ENCODE measurements at regions of chr1 and their contacts with region 1.

Region 1: GRCh38 chr1:37434292-37434907 is 40.0 kb upstream of the ZC3H12A start:
- DNase-seq: peak; percentile 43 to 84 (median 61)
- ATAC-seq: peak; percentile 42 to 83 (median 78)
- H3K4me3 ChIP-seq: no peak overlapping the region
- H3K27ac ChIP-seq: no peak overlapping the region
- H3K4me1 ChIP-seq: no peaks in the 10 kb centered on the region
- H3K27me3 ChIP-seq: peaks cover 0 to 62% (median 19%) of the 10 kb centered on the region in 9 donors
- CTCF ChIP-seq: peak; percentile 74 to 95 (median 87)
- POLR2A ChIP-seq: no peak

Region 2: GRCh38 chr1:36516372-36517325 is 917.8 kb before region 1 on chr1:
- intact Hi-C with region 1: loop called in 3 of 10 experiments (anchors 5 to 10 kb)
- DNase-seq: peak in 4 of 5 donors; percentile 22 to 71 (median 46)
- ATAC-seq: peak in 3 of 4 donors; percentile 36 to 68 (median 67)
- H3K4me3 ChIP-seq: no peak overlapping the region
- H3K27ac ChIP-seq: no peak overlapping the region
- H3K4me1 ChIP-seq: no peaks in the 10 kb centered on the region
- H3K27me3 ChIP-seq: peaks cover 0 to 16% (median 0%) of the 10 kb centered on the region in 9 donors
- CTCF ChIP-seq: peak; percentile 46 to 80 (median 66)
- POLR2A ChIP-seq: no peak

Region 3: DNA sequence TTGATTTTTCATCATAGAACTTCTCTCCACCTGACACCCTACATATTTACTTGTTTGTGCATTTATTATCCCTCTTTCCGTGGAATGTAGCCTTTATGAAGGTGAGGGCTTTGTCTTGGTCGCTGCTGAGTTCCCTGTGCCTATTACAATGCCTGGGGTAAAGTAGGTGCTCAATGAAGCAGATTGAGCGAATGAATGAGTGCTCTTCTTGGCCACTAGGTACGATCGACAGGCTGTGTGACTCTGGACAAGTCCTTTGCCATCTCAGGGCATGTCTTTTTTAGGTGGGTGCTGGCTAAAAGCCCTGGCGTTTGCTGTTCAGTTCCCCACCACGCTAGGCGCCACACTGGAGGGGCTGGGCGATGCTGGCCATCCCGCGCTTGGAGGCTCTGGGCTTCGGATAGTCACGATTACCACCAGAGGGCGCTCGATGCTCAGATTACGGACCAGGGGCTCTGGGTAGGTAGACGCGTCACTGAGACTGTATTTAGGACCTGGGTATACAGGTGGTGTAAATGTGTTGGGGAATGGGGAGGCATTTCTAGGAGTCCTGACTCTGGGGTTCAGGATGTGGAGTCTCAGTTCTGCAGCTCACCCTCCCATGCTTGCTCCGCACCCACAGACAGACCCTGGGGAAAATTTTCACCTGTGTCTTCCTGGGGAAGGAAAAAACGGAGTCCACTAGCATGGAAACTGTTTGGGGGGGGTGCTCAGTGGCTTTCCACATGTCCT is 880.6 kb before region 1 on chr1:
- intact Hi-C with region 1: loop called in 1 of 10 experiments (anchors 5 kb)
- DNase-seq: peak; percentile 38 to 72 (median 57)
- ATAC-seq: peak in 3 of 4 donors; percentile 62 to 84 (median 78)
- H3K4me3 ChIP-seq: no peak overlapping the region
- H3K27ac ChIP-seq: no peak overlapping the region
- H3K4me1 ChIP-seq: no peaks in the 10 kb centered on the region
- H3K27me3 ChIP-seq: peaks cover 3 to 58% (median 32%) of the 10 kb centered on the region in 9 donors
- CTCF ChIP-seq: peak; percentile 38 to 68 (median 53)
- POLR2A ChIP-seq: no peak

Region 4: DNA sequence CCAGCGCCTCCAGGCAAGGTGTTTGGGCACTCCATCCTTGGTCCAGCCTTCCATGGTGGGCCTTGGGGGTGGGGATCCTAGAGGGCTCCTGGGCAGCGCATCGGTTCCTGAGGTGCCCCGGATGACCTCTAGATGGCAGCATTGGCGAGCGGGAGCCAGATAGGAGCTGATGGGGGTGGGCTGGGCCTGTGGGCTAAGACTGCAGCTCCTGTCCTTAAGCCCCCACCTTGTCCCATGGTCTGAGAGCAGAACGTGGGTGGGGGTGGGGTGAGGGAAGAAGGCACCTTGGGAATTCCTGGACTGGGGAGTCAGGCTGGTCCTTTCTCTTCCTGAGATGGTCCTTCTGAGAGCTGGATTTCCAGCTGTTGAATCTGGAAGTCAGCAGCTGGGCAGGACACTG is 858.3 kb before region 1 on chr1:
- intact Hi-C with region 1: loop called (anchors 1 to 10 kb)
- DNase-seq: peak; percentile 24 to 69 (median 39)
- ATAC-seq: peak in 3 of 4 donors; percentile 59 to 68 (median 68)
- H3K4me3 ChIP-seq: no peak overlapping the region
- H3K27ac ChIP-seq: no peak overlapping the region
- H3K4me1 ChIP-seq: no peaks in the 10 kb centered on the region
- H3K27me3 ChIP-seq: peaks cover 0 to 73% (median 24%) of the 10 kb centered on the region in 9 donors
- CTCF ChIP-seq: peak; percentile 58 to 76 (median 70)
- POLR2A ChIP-seq: no peak

Region 5: DNA sequence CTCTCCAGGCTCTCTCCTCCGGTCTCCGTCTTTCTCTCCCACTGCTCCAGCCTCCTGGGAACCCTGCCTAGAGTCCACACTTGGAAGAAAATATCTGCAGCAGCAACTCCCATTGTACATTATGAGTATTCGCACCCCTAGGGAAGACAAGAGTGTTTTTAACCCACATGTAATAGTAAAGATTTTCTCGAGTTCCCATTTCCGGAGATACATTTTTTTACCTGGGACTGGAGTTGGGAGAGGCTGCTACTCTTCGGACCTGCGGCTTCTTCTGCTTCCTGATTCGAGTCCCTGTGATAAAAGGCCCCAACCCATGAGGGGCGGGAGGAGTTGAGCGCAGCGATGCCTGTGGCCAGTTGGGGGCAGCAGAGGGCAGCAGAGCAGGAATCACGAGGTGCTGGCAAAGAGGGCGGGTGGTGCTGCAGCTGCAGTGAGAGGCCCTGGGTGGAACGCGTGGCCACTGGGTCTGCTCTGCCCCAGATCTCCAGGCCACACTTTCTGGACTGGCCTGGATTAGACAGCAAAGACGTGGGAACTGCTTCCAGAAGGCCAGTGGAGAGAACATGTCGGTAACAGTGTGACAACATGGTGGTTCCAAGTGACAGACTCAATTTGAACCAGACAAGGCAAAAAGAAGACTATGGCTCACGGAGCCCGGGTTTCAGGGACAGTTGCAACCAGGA is 730.7 kb before region 1 on chr1:
- intact Hi-C with region 1: loop called (anchors 2 to 5 kb)
- DNase-seq: peak; percentile 62 to 84 (median 68)
- ATAC-seq: peak; percentile 37 to 91 (median 90)
- H3K4me3 ChIP-seq: no peak overlapping the region
- H3K27ac ChIP-seq: no peak overlapping the region
- H3K4me1 ChIP-seq: no peaks in the 10 kb centered on the region
- H3K27me3 ChIP-seq: peaks cover 0 to 62% (median 11%) of the 10 kb centered on the region in 9 donors
- CTCF ChIP-seq: peak; percentile 68 to 84 (median 78)
- POLR2A ChIP-seq: no peak

Region 6: GRCh38 chr1:37038227-37039076 is 395.9 kb before region 1 on chr1:
- intact Hi-C with region 1: loop called in 1 of 10 experiments (anchors 10 kb)
- DNase-seq: peak in 1 of 5 donors; percentile 42
- ATAC-seq: peak in 3 of 4 donors; percentile 64 to 85 (median 77)
- H3K4me3 ChIP-seq: no peak overlapping the region
- H3K27ac ChIP-seq: no peak overlapping the region
- H3K4me1 ChIP-seq: peaks cover 0 to 29% (median 1%) of the 10 kb centered on the region in 12 donors
- H3K27me3 ChIP-seq: peaks cover 40 to 100% (median 72%) of the 10 kb centered on the region in 9 donors
- CTCF ChIP-seq: peak in 9 of 12 donors; percentile 11 to 45 (median 32)
- POLR2A ChIP-seq: no peak

Measured in heart left ventricle (tissue), 16 donors.